ENCODE measurements at regions of chr4 and their contacts with region 1.

Region 1: DNA sequence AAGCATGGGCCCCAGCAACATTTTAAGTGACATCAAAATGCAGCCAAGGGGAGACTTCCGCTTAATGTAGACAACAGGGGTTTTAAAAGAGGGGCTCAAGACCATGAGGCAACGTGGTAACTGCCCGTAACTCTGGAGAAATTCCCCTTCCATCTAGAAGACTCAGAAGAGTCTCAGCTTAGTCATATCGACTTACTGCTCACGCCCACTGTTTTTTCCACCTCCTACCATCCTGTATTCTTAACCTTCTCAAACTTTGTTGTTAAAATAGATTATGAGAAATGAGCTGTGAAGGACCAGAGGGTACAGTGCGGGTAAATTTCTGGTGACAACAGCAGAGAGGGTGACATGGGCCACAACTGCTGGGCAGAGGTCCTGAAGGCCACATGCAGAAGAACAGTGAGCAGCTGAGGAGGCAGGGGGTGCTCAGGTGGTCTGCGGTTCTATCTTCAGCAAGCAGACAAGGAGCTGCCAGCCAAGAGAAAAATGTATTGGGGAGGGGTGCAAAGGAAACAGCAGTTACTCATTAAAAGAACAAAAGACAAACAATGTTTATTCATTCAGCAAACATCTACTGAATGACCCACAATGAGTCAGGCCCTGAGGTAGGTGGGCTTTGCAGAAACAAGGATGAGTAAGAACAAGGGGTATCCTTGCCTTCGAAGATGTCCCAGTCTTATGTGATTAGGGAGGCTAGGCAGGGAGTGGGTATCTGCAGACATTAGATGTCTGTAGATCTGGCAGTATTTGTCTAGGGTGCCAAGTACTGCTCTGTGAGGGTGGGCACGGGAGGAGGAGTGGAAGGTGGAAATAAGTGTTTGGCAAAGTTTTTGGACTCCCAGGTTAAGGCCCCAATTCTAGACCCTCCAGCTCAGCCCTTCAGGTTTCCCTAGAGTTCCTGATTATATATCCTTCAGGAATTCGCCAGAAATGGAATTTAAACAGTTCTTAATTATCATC is 175.3 kb downstream of the TSPAN5 start:
- DNase-seq: peak; percentile 69
- H3K4me3 Mint-ChIP-seq: peak overlapping the region; percentile 47
- H3K27ac Mint-ChIP-seq: peak overlapping the region; percentile 96
- H3K4me1 Mint-ChIP-seq: peaks cover 74% of the 10 kb centered on the region
- H3K27me3 Mint-ChIP-seq: no peaks in the 10 kb centered on the region

Region 2: DNA sequence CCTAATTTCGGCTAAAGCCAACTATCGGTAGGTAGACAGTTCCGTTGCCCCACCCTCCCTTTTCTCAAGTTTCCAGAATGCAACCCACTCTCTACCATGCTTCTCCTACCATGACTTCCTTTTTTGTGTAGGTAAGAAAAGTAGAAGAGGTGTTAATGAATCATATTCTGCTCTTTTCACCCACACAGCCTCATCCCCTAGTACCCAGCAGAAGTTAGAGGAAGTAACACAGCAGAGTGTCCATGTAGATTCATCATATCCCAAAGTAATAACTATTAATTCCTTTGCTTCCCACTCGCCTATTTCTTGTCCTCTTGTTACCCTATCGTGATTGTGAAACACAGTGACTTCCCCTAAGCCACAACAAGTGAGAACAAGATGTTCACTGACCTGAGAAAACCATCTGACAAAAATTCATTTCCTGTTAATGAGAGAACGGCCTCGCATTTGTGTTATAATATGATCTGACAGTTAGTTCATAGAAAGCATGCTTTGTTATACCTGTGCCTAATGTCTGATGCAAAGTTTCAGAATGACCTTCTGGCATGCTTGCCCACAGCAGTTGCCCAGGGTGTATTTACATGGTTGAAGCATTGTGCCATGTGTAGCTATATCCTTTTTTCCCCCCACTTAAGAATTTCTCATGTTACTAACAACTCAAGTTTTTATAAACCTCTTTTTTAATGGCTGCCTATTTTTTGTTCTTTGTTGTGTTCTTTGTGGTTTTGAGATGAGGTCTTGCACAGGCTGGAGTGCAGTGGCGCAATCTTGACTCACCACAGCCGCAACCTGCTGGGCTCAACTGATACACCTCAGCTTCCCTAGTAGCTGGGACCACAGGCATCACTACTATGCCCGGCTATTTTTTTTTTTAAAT is 36.4 kb before region 1 on chr4:
- CTCF ChIA-PET with region 1: interaction called, 4 read pairs
- POLR2A ChIA-PET with region 1: no interaction called
- intact Hi-C with region 1: loop called (anchors 1 kb)
- DNase-seq: peak; percentile 81
- H3K4me3 Mint-ChIP-seq: peak overlapping the region; percentile 48
- H3K27ac Mint-ChIP-seq: peak overlapping the region; percentile 87
- H3K4me1 Mint-ChIP-seq: peaks cover 35% of the 10 kb centered on the region
- H3K27me3 Mint-ChIP-seq: no peaks in the 10 kb centered on the region

Region 3: GRCh38 chr4:98493296-98493695 is 10.2 kb after region 1 on chr4:
- CTCF ChIA-PET with region 1: interaction called, 3 read pairs
- POLR2A ChIA-PET with region 1: no interaction called
- intact Hi-C with region 1: loop called (anchors 1 kb)
- DNase-seq: no peak
- H3K4me3 Mint-ChIP-seq: no peak overlapping the region
- H3K27ac Mint-ChIP-seq: no peak overlapping the region
- H3K4me1 Mint-ChIP-seq: peaks cover 31% of the 10 kb centered on the region
- H3K27me3 Mint-ChIP-seq: no peaks in the 10 kb centered on the region

Region 4: DNA sequence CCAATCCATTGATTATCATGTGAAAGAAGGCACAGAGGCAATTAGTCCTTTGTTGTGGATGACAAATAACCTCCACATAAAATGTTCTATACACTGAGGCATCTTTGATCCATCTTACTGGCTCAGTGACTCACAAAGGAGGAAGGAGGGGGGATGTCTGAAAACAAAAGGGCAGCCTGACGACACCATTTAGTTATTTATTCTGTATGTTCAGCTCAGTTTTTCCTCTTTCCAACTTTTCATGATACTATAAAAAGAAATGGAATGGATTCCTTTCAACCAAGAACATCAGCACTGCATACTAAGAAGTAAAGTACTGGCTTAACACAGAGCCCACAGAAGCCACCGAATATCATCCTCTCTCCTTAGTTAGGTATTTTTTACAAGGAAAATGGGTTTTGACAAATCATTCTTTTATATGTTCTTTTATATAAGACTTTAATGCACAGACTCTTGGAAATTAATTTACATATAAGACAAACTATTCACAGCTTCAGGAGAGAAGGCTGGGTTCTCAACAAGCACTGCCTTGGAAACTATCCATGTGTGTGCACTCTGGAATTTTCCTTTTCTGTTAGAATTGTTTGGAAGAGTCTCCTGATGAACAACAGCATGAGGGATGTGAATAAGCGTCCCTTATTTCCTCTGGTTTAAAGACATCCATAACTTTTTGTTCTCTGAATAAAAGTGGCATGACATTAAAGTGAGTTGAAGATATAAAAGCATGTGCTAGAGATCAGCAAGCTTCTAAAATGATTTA is 39.7 kb after region 1 on chr4:
- CTCF ChIA-PET with region 1: no interaction called
- POLR2A ChIA-PET with region 1: interaction called, 3 read pairs
- intact Hi-C with region 1: loop called (anchors 1 kb)
- DNase-seq: no peak
- H3K4me3 Mint-ChIP-seq: no peak overlapping the region
- H3K27ac Mint-ChIP-seq: no peak overlapping the region
- H3K4me1 Mint-ChIP-seq: peaks cover 67% of the 10 kb centered on the region
- H3K27me3 Mint-ChIP-seq: no peaks in the 10 kb centered on the region

Region 5: GRCh38 chr4:98864560-98864959 is 381.4 kb after region 1 on chr4:
- CTCF ChIA-PET with region 1: no interaction called
- POLR2A ChIA-PET with region 1: no interaction called
- intact Hi-C with region 1: loop called (anchors 2 kb)
- DNase-seq: peak; percentile 79
- H3K4me3 Mint-ChIP-seq: no peak overlapping the region
- H3K27ac Mint-ChIP-seq: peak overlapping the region; percentile 42
- H3K4me1 Mint-ChIP-seq: peaks cover 13% of the 10 kb centered on the region
- H3K27me3 Mint-ChIP-seq: no peaks in the 10 kb centered on the region